WTC11 (cell line): ENCODE measurements at regions of chr11 and their contacts with region 1.

Region 1: GRCh38 chr11:76714499-76714898 is 44.0 kb upstream of the LRRC32 start:
- DNase-seq: no peak
- ATAC-seq: peak; percentile 47; the same call in 1 of the 2 replicates
- H3K4me3 Mint-ChIP-seq: no peak overlapping the region
- H3K27ac Mint-ChIP-seq: no peak overlapping the region
- H3K4me1 Mint-ChIP-seq: no peaks in the 10 kb centered on the region
- H3K27me3 Mint-ChIP-seq: no peaks in the 10 kb centered on the region
- CTCF ChIP-seq: no peak

Region 2: GRCh38 chr11:76642341-76642740 is 72.2 kb before region 1 on chr11:
- CTCF ChIA-PET with region 1: no interaction called
- POLR2A ChIA-PET with region 1: no interaction called
- DNase-seq: no peak
- ATAC-seq: 0 out of 2 replicates have a peak, but pooled peaks have one; percentile 34
- H3K4me3 Mint-ChIP-seq: no peak overlapping the region
- H3K27ac Mint-ChIP-seq: no peak overlapping the region
- H3K4me1 Mint-ChIP-seq: peaks cover 6% of the 10 kb centered on the region
- H3K27me3 Mint-ChIP-seq: peaks cover 5% of the 10 kb centered on the region
- CTCF ChIP-seq: no peak

Region 3: DNA sequence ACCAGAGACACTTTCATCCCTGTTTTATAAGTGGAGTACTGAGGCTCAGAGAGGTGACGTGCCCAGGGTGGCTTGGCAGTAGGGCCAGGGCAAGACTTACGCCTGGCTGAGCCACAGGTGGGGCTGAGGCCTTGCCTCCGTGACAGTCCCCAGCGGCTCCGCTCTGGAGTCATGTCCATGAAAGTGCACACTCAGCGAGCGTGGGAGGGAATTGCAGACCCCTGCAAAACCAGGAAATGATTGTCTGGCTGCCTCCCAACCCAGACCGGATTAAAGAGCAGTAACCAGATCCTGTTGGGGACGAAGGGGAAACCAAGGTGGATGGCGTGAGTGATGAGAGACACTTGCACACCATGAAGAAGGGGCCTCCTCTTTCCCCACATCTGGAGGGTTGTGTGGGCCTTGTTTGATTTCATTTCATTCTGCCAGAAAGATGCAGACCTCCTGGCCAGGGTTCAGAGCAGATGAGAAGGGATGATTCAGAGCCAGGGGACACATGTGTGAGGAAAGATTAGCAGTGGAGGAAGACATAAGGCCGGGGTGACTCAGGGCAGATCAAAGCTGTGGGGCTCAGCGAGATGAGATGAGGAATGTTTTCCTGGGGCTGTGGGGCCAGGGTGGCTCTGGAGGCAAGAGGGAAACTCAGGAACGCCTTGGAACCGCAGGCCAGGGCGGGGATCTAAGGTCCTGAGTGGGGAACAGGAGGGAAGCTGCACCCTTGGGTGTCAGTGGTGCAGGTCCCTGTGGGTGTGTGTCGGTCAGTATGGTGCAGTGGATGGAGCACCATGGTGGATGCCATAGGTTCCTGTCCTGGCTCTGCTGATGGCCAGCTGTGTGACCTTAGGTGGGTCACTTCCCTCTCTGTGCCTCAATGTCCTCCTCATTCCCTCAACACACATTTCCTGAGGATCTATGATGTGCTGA is 14.1 kb before region 1 on chr11:
- CTCF ChIA-PET with region 1: interaction called, 12 read pairs
- POLR2A ChIA-PET with region 1: no interaction called
- DNase-seq: no peak
- ATAC-seq: no peak
- H3K4me3 Mint-ChIP-seq: no peak overlapping the region
- H3K27ac Mint-ChIP-seq: no peak overlapping the region
- H3K4me1 Mint-ChIP-seq: peaks cover 47% of the 10 kb centered on the region
- H3K27me3 Mint-ChIP-seq: no peaks in the 10 kb centered on the region
- CTCF ChIP-seq: no peak